ENCODE measurements at regions of chr3 and their contacts with region 1.

Region 1: GRCh38 chr3:86990734-86991481 is at the start of gene VGLL3:
- DNase-seq: peak in 1 of 2 donors; percentile 90
- H3K4me3 ChIP-seq: peak within 1 kb of the TSS; percentile 65 to 89
- H3K27ac ChIP-seq: peak within 1 kb of the TSS; percentile 90 to 91
- H3K4me1 ChIP-seq: peaks cover 0 to 6% of the 10 kb centered on the region in 2 donors
- H3K27me3 ChIP-seq: no peaks in the 10 kb centered on the region
- CTCF ChIP-seq: no peak
- total RNA-seq, gene VGLL3: 138 TPM

Region 2: GRCh38 chr3:86793786-86794185 is 197.1 kb before region 1 on chr3:
- intact Hi-C with region 1: loop called (anchors 2 kb)
- DNase-seq: no peak
- H3K4me3 ChIP-seq: peak overlapping the region in 1 of 2 donors; percentile 39
- H3K27ac ChIP-seq: peak overlapping the region; percentile 88 to 89
- H3K4me1 ChIP-seq: peaks cover 0 to 15% of the 10 kb centered on the region in 2 donors
- H3K27me3 ChIP-seq: no peaks in the 10 kb centered on the region
- CTCF ChIP-seq: no peak

Region 3: GRCh38 chr3:86937305-86937791 is 53.6 kb before region 1 on chr3:
- intact Hi-C with region 1: loop called (anchors 2 kb)
- DNase-seq: peak in 1 of 2 donors; percentile 81
- H3K4me3 ChIP-seq: no peak overlapping the region
- H3K27ac ChIP-seq: peak overlapping the region; percentile 20 to 64
- H3K4me1 ChIP-seq: peaks cover 0 to 13% of the 10 kb centered on the region in 2 donors
- H3K27me3 ChIP-seq: no peaks in the 10 kb centered on the region
- CTCF ChIP-seq: no peak

Region 4: DNA sequence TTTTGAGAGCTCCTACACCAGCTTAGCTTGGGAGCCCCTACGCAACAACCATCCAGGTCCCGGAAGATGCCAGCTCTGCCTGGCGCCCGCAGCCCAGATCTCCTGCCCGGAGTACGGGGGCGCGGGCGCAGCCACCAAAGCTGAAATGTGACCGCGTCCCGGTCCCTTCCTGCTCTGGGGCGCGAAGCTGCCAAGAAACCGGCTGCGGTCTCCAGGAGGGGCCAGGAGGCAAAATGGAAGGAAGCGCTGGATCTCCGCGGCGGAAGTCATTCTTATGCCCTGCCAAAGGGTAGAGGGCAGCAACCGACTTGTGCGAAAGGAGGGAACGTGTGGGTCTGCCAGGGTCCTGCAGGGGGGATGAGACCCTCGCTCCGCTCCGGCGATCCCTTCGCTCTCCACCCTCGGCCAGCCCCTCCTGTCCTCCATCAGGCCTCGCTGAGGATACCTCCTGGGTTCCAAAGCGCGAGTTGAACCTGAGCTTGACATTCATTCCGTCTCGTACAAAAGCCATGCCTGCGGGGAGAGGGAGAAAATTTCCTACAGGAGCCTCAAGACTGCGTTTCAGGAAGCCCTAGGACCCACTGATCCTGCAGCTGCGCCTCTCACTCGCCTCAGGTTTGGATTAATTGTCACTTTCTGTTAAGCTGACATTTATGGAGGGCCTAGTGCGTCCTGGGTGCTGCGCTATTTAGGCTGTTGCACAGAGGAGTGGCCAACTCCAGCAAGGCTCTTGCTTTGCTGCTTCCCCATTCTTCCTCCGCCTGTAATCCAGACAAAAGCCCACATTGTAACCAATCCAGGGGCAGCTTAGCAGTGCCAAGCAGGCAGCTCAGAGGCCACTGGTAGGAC is 98.3 kb after region 1 on chr3:
- intact Hi-C with region 1: loop called (anchors 2 kb)
- DNase-seq: peak; percentile 11 to 88
- H3K4me3 ChIP-seq: peak overlapping the region; percentile 69 to 77
- H3K27ac ChIP-seq: peak overlapping the region; percentile 94 to 97
- H3K4me1 ChIP-seq: peaks cover 0 to 8% of the 10 kb centered on the region in 2 donors
- H3K27me3 ChIP-seq: no peaks in the 10 kb centered on the region
- CTCF ChIP-seq: no peak

Region 5: GRCh38 chr3:87148020-87148419 is 157.1 kb after region 1 on chr3:
- intact Hi-C with region 1: no loop called
- DNase-seq: no peak
- H3K4me3 ChIP-seq: no peak overlapping the region
- H3K27ac ChIP-seq: no peak overlapping the region
- H3K4me1 ChIP-seq: no peaks in the 10 kb centered on the region
- H3K27me3 ChIP-seq: no peaks in the 10 kb centered on the region
- CTCF ChIP-seq: no peak

Region 6: GRCh38 chr3:87167628-87168456 is 176.9 kb after region 1 on chr3:
- intact Hi-C with region 1: no loop called
- DNase-seq: no peak
- H3K4me3 ChIP-seq: peak overlapping the region; percentile 44 to 49
- H3K27ac ChIP-seq: no peak overlapping the region
- H3K4me1 ChIP-seq: peaks cover 0 to 2% of the 10 kb centered on the region in 2 donors
- H3K27me3 ChIP-seq: no peaks in the 10 kb centered on the region
- CTCF ChIP-seq: peak in 2 of 3 experiments; percentile 64 to 68

Region 7: GRCh38 chr3:87227104-87227834 is 236.4 kb after region 1 on chr3 and contains the start of gene CHMP2B:
- intact Hi-C with region 1: loop called (anchors 2 kb)
- DNase-seq: peak; percentile 74 to 97
- H3K4me3 ChIP-seq: peak within 1 kb of the TSS; percentile 78 to 88
- H3K27ac ChIP-seq: peak within 1 kb of the TSS; percentile 83 to 88
- H3K4me1 ChIP-seq: peaks cover 0 to 2% of the 10 kb centered on the region in 2 donors
- H3K27me3 ChIP-seq: no peaks in the 10 kb centered on the region
- CTCF ChIP-seq: no peak
- total RNA-seq, gene CHMP2B: 27.7 TPM

Region 8: GRCh38 chr3:88291486-88291885 is 1300.6 kb after region 1 on chr3:
- intact Hi-C with region 1: no loop called
- DNase-seq: no peak
- H3K4me3 ChIP-seq: no peak overlapping the region
- H3K27ac ChIP-seq: no peak overlapping the region
- H3K4me1 ChIP-seq: no peaks in the 10 kb centered on the region
- H3K27me3 ChIP-seq: no peaks in the 10 kb centered on the region
- CTCF ChIP-seq: no peak